ENCODE measurements at regions of chr19 and their contacts with region 1.

Region 1: GRCh38 chr19:3544742-3545668 is 6.0 kb downstream of the TEKTIP1 start:
- DNase-seq: peak; percentile 89
- CTCF ChIP-seq: peak; percentile 99

Region 2: DNA sequence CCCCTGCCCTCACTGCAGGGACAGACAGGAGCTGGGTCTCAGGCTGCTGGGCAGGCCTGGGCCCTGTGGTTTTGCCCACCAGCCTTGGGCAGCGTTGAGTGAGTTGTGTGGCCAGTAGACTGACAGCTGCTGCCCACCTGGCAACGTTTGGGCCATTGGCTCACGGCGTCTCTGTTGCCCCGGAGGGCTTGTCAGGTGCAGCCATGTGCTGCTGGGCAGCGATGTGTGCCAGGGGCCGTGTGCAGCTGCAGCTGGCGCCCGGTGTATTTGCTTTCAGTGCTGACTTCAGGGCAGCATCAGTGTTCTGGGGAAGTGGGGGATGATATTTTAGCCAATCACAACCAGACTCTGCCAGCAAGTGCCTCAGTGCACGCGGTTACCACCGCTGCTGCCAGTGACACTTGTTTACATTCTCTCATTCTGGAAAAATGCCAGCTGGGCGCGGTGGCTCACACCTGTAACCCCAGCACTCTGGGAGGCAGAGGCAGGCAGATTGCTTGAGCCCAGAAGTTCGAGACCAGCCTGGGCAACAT is 28.3 kb before region 1 on chr19:
- CTCF ChIA-PET with region 1: interaction called, 11 read pairs
- POLR2A ChIA-PET with region 1: no interaction called
- DNase-seq: no peak
- CTCF ChIP-seq: no peak

Region 3: DNA sequence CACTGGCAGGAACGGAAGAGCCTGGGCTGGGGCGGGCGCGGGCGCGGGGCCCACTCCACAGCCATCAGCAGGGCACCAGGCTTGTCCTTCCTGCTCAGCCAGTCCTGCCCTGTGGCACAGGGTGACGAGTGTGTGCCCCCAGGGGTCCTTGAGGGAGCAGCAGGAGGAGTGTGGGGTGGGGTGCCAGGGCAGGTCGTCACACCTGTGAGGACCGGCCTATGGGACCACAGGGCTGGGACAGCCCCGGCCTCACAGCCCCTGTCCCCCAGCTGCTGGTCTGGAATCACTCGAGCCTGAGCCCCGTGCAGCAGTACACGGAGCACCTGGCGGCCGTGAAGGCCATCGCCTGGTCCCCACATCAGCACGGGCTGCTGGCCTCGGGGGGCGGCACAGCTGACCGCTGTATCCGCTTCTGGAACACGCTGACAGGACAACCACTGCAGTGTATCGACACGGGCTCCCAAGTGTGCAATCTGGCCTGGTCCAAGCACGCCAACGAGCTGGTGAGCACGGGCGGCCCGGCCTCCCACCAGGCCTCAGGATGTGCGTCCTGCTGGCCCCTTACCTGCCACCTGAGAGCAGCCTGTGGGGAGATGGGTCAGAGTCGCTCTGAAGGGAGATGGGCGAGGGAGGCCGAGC is 12.7 kb before region 1 on chr19:
- CTCF ChIA-PET with region 1: interaction called, 12 read pairs
- POLR2A ChIA-PET with region 1: no interaction called
- DNase-seq: no peak
- CTCF ChIP-seq: no peak

Region 4: GRCh38 chr19:3557461-3558248 is 12.7 kb after region 1 on chr19 and contains the start of gene MFSD12:
- CTCF ChIA-PET with region 1: interaction called, 68 read pairs
- POLR2A ChIA-PET with region 1: interaction called, 4 read pairs
- DNase-seq: peak; percentile 100
- CTCF ChIP-seq: no peak

Region 5: DNA sequence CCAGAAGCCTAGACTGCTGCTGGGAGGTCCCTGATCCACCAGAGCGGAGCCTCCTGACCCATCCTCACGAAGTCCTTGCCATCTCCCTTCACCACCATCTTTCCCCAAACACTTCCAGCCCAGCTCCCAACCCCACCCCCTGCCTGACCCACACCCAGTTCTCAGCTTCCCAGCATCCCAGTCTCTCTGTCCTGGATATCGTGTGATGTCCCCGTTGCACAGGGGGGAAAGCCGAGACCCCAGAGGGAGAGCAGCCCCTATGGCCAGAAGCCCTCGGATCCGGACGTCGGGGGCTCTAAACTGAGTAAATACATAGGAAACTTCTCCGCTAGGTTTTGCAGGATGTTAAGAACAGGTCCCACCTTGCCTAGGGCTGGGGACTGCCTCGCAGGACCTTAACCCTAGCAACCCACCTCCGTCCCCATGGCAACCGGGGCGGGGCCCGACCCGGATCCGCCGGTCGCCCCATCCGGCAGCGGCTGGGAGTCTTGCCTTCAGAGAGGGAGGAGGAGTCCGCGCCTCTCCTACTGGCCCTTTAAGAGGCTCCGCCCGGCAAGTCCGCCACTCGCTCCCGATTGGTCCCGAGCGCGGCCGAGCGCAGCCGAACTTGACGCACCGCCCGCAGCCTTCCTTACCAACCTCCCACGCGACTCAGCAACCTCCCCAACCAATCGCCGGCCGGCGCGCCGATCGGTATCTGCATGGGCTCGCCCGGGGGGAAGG is 27.3 kb after region 1 on chr19:
- CTCF ChIA-PET with region 1: interaction called, 15 read pairs
- POLR2A ChIA-PET with region 1: no interaction called
- DNase-seq: peak; percentile 98
- CTCF ChIP-seq: no peak

Region 6: DNA sequence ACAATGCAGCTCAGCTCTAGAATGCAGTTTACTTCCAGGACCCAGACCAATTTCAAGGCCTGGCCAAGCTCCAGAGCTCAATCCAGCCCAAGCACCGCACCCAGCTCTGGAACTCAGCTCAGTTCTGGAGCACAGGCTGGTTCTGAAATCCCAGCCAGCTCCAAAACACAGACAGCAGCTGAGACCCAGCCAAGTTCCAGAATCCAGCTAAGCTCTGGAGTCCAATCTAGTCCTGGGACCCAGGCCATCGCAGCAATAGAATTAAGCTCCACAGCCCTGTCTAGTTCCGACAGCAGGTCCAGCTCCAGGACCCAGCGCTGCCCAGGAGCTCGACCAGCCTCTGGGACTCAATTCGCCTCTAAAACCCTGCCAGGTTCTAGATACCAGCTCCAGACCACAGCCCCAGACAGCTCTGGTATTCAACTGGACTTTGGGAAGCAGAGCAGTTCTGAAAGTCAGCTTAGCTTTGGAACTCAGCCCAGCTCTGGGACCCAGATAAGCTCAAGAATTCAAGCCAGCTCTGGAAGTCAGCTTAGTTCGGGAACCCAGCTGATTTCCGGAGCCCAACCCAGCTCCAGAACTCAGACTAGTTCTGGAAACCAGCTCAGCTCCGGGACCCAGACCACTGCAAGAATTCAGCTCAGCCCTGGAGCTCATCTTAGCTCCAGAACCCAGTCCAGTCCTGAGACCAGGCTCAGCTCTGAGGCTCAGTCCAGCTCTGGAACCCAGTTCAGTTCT is 47.0 kb after region 1 on chr19:
- CTCF ChIA-PET with region 1: interaction called, 17 read pairs
- POLR2A ChIA-PET with region 1: no interaction called
- DNase-seq: no peak
- CTCF ChIP-seq: no peak

Region 7: GRCh38 chr19:3618144-3618810 is 73.3 kb after region 1 on chr19:
- CTCF ChIA-PET with region 1: interaction called, 24 read pairs
- POLR2A ChIA-PET with region 1: no interaction called
- DNase-seq: peak; percentile 87
- CTCF ChIP-seq: peak; percentile 92

Region 8: GRCh38 chr19:3642296-3642695 is 97.3 kb after region 1 on chr19:
- CTCF ChIA-PET with region 1: no interaction called
- POLR2A ChIA-PET with region 1: no interaction called
- DNase-seq: no peak
- CTCF ChIP-seq: no peak